ENCODE measurements at regions of chr2 and their contacts with region 1.

Region 1: GRCh38 chr2:11784747-11785610 is 38.5 kb downstream of the LPIN1 start:
- H3K4me3 ChIP-seq: no peak overlapping the region
- H3K27ac ChIP-seq: no peak overlapping the region
- H3K4me1 ChIP-seq: 0 out of 2 replicates have a peak, but pooled peaks cover 2% of the 10 kb centered on the region
- CTCF ChIP-seq: peak; percentile 87

Region 2: DNA sequence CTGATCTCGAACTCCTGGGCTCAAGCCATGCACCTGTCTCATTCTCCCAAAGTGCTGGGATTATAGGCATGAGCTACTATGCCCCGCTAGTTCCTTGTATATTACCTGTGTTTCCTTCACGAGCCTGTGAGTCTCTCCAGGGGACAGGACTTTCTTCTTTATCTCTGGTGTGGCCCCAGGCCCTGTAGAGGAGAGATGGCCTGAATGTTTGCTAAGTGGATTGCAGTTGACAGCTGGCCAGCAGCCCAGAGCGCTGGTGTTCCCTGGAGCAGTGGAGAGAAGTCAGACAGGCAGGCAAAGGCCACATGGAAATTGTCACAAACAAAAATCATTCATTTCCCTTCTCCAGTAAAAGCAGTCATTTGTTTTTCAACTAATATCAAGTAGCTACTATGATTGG is 20.6 kb before region 1 on chr2:
- CTCF ChIA-PET with region 1: interaction called, 11 read pairs
- POLR2A ChIA-PET with region 1: no interaction called
- H3K4me3 ChIP-seq: no peak overlapping the region
- H3K27ac ChIP-seq: no peak overlapping the region
- H3K4me1 ChIP-seq: no peaks in the 10 kb centered on the region
- CTCF ChIP-seq: no peak